ENCODE measurements at regions of chr11 and their contacts with region 1.

Region 1: GRCh38 chr11:128195057-128195751 is 392.2 kb downstream of the ETS1 start:
- DNase-seq: no peak
- H3K4me3 ChIP-seq: no peak overlapping the region
- H3K27ac ChIP-seq: no peak overlapping the region
- H3K4me1 ChIP-seq: no peaks in the 10 kb centered on the region
- H3K27me3 ChIP-seq: no peaks in the 10 kb centered on the region
- CTCF ChIP-seq: no peak
- EP300 ChIP-seq: no peak
- POLR2A ChIP-seq: no peak

Region 2: DNA sequence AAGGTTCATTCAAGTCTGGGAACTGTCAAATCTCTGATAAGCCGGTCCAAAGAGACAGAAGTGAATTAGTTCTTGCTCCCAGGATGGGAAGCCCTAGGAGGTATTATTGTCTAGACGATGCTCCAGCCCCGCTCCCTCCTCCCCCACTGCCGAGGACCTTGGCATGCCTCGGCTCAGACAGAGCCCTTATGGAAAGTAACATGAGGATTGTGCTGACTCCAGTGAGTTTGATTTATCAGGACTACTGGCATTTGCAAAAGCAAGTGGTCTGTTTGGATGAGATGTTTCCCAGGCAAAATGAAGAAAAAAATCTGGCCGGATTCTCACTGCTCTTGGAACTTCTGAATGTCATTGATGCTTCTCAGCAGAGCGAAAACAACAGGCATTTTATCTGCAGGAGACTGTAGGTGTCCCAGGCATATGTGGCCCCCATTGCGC is 51.2 kb after region 1 on chr11:
- intact Hi-C with region 1: loop called in 1 of 4 experiments (anchors 10 kb)
- DNase-seq: peak; percentile 42 to 64 (median 47)
- H3K4me3 ChIP-seq: no peak overlapping the region
- H3K27ac ChIP-seq: no peak overlapping the region
- H3K4me1 ChIP-seq: peaks cover 5% of the 10 kb centered on the region
- H3K27me3 ChIP-seq: no peaks in the 10 kb centered on the region
- CTCF ChIP-seq: no peak
- EP300 ChIP-seq: no peak
- POLR2A ChIP-seq: no peak

Region 3: GRCh38 chr11:128323381-128323780 is 128.2 kb after region 1 on chr11:
- intact Hi-C with region 1: no loop called
- DNase-seq: no peak
- H3K4me3 ChIP-seq: no peak overlapping the region
- H3K27ac ChIP-seq: no peak overlapping the region
- H3K4me1 ChIP-seq: no peaks in the 10 kb centered on the region
- H3K27me3 ChIP-seq: no peaks in the 10 kb centered on the region
- CTCF ChIP-seq: no peak
- EP300 ChIP-seq: no peak
- POLR2A ChIP-seq: no peak

Measured in ovary (tissue), 10 donors.